ENCODE measurements at regions of chr1 and their contacts with region 1.

Region 1: GRCh38 chr1:202505356-202505755 is 156.9 kb downstream of the PPP1R12B start:
- DNase-seq: no peak
- H3K4me3 ChIP-seq: no peak overlapping the region
- H3K27ac ChIP-seq: peak overlapping the region; percentile 36 to 79 (median 74)
- H3K4me1 ChIP-seq: peaks cover 0 to 11% (median 0%) of the 10 kb centered on the region in 3 donors
- H3K27me3 ChIP-seq: no peaks in the 10 kb centered on the region
- CTCF ChIP-seq: no peak
- POLR2A ChIP-seq: no peak

Region 2: GRCh38 chr1:202405928-202406327 is 99.4 kb before region 1 on chr1:
- intact Hi-C with region 1: no loop called
- DNase-seq: no peak
- H3K4me3 ChIP-seq: no peak overlapping the region
- H3K27ac ChIP-seq: no peak overlapping the region
- H3K4me1 ChIP-seq: peaks cover 0 to 8% (median 0%) of the 10 kb centered on the region in 3 donors
- H3K27me3 ChIP-seq: no peaks in the 10 kb centered on the region
- CTCF ChIP-seq: no peak
- POLR2A ChIP-seq: no peak

Region 3: DNA sequence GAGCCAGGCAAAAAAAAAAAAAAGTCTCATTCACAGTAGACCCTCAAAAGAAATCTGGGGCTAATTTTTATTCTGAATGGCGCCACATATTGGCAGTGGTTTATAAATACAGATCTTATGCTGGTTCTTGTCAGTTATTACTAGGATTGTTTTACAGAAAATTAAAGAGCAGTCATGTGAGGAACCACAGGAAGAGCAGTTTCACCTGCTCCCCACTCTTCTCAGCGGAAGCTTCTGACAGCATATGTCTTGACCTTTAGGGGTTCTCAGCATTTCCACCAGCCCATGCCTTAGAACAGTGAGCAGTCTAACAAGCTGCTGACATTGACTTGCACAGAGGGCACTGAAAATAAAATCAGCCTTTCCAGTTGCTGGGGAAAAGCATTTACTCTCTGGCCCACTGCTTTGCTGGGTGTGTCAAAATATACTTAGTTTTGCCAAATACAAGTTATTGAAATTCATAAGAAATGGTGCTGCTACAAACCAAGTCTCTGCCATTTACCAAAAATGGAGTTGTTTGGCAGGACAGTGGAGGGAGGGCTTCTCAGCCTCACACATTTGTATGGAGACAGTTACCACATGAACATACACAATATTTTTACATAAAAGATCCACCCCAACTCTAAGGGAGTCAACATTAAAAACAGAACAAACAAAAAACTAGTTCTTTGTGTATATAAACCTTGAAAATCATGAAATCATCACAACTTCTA is 60.7 kb after region 1 on chr1:
- intact Hi-C with region 1: loop called (anchors 5 kb)
- DNase-seq: no peak
- H3K4me3 ChIP-seq: no peak overlapping the region
- H3K27ac ChIP-seq: peak overlapping the region in 3 of 4 donors; percentile 27 to 71 (median 71)
- H3K4me1 ChIP-seq: peaks cover 0 to 89% (median 34%) of the 10 kb centered on the region in 3 donors
- H3K27me3 ChIP-seq: no peaks in the 10 kb centered on the region
- CTCF ChIP-seq: no peak
- POLR2A ChIP-seq: no peak